T-cell (primary cell): ENCODE measurements at regions of chr11 and their contacts with region 1.

Region 1: GRCh38 chr11:57761301-57762234 is at the start of gene CTNND1:
- DNase-seq: no peak
- ATAC-seq: no peak
- H3K4me3 ChIP-seq: peak within 1 kb of the TSS in 1 of 2 donors; percentile 10
- H3K4me3 Mint-ChIP-seq: peak within 1 kb of the TSS in 2 of 3 donors; percentile 37 to 56
- H3K27ac ChIP-seq: no peak within 1 kb of the TSS
- H3K27ac Mint-ChIP-seq: no peak within 1 kb of the TSS
- H3K4me1 ChIP-seq: peaks cover 3 to 14% of the 10 kb centered on the region in 2 experiments
- H3K4me1 Mint-ChIP-seq: peaks cover 13 to 35% (median 14%) of the 10 kb centered on the region in 3 donors
- H3K27me3 ChIP-seq: no peaks in the 10 kb centered on the region
- H3K27me3 Mint-ChIP-seq: no peaks in the 10 kb centered on the region
- total RNA-seq, gene CTNND1: 8.3 to 17.5 (median 12.5) TPM

Region 2: DNA sequence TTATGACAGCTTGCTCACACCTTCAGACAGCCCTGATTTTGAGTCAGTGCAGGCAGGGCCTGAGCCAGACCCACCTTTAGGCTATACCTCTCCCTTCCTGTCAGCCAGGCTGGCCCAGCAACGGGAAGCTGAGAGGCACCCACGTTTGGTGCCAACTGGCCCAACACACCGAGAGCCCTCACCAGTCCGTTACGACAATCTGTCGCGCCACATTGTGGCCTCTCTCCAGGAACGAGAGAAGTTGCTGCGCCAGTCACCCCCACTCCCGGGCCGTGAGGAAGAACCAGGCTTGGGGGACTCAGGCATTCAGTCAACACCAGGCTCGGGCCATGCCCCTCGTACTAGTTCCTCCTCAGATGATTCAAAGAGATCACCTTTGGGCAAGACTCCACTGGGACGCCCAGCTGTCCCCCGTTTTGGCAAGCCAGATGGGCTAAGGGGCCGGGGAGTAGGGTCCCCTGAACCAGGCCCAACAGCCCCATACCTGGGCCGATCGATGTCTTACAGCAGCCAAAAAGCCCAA is 62.7 kb before region 1 on chr11:
- CTCF ChIA-PET with region 1: no interaction called
- POLR2A ChIA-PET with region 1: interaction called in 1 of 2 experiments, 17 read pairs
- DNase-seq: no peak
- ATAC-seq: peak in 2 of 4 experiments; percentile 9 to 31
- H3K4me3 ChIP-seq: no peak overlapping the region
- H3K4me3 Mint-ChIP-seq: no peak overlapping the region
- H3K27ac ChIP-seq: no peak overlapping the region
- H3K27ac Mint-ChIP-seq: no peak overlapping the region
- H3K4me1 ChIP-seq: no peaks in the 10 kb centered on the region
- H3K4me1 Mint-ChIP-seq: peaks cover 0 to 8% (median 0%) of the 10 kb centered on the region in 3 donors
- H3K27me3 ChIP-seq: no peaks in the 10 kb centered on the region
- H3K27me3 Mint-ChIP-seq: no peaks in the 10 kb centered on the region

Region 3: DNA sequence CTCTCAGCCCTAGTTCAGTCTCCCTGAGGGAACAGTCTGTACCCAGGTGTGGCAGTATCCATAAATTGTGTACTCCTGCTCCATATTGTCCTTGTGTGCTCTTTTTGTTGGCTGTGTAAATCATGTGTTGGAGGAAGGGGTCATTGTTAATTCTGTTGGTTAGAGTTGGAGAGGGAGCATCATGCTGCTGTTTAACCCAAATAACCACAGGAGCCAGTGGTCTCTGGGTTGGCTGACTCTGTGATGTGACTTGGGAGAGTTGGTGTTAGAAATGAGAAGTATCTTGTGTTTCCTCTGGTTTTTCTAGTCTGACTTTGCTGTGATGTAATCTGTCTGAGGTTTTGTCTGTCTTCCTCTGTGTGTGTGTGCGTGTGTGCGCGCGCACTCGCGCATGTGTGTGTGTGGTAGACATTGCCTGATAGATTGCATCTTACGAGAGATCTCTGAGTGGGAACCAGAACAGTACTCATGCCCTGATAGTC is 30.5 kb after region 1 on chr11:
- CTCF ChIA-PET with region 1: interaction called in 1 of 2 experiments, 6 read pairs
- POLR2A ChIA-PET with region 1: interaction called in 1 of 2 experiments, 10 read pairs
- DNase-seq: peak; percentile 70 to 94 (median 86)
- ATAC-seq: peak; percentile 95 to 97 (median 96)
- H3K4me3 ChIP-seq: peak overlapping the region in 1 of 2 donors; percentile 30
- H3K4me3 Mint-ChIP-seq: peak overlapping the region; percentile 52 to 60 (median 56)
- H3K27ac ChIP-seq: peak overlapping the region; percentile 70
- H3K27ac Mint-ChIP-seq: peak overlapping the region; percentile 98 to 99
- H3K4me1 ChIP-seq: peaks cover 28 to 30% of the 10 kb centered on the region in 2 experiments
- H3K4me1 Mint-ChIP-seq: peaks cover 34 to 37% (median 34%) of the 10 kb centered on the region in 3 donors
- H3K27me3 ChIP-seq: no peaks in the 10 kb centered on the region
- H3K27me3 Mint-ChIP-seq: no peaks in the 10 kb centered on the region